ENCODE measurements at regions of chr6 and their contacts with region 1.

Region 1: DNA sequence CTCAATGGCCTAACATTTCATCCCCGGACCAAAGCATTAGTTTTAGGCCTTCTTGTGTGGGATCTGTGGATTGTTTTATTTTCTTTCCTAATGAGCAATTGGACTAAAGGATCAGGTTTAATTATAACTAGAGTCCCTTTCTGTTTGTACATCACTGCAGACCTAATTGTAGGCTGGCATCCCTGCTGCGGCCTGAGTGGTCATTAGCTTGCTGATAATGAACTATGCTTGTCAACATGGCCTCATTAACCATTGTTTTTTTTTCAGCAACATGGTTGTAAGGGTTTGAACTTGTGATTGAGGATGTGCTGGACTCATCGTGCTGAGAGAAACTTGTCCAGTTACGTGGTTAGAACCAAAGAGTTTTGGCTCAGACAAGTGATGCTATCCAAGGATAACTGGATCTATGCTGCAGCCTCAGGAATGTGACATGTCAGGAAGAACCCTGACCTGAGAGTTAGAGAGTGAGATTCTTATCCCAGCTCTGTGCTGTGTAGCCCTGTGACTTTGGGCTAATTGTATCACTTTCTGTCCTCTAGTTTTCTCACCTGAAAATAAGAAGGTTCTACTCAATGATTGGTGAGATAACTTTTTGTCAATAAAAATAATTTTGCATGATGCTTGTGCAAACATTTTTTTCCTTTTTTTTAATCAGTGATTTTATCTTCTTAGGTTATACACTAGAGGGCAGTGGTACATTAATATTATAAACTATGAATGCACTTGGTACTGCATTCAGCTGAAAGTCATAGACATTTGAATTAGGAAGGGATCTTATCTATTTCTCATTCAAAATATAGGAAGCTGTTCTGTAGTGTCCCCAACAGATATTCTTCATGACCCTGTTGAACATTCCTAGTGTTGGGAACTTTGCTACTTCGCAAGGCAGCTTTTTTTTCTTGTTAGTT is 140.9 kb downstream of the RNF144B start:
- DNase-seq: no peak
- H3K4me3 ChIP-seq: no peak overlapping the region
- H3K27ac ChIP-seq: no peak overlapping the region
- H3K4me1 ChIP-seq: no peaks in the 10 kb centered on the region
- H3K27me3 ChIP-seq: peaks cover 2% of the 10 kb centered on the region
- CTCF ChIP-seq: peak; percentile 30 to 46

Region 2: GRCh38 chr6:17816921-17817611 is 711.0 kb before region 1 on chr6:
- CTCF ChIA-PET with region 1: no interaction called
- dilution Hi-C with region 1: no loop called
- in situ Hi-C with region 1: no loop called
- intact Hi-C with region 1: no loop called
- DNase-seq: no peak
- H3K4me3 ChIP-seq: no peak overlapping the region
- H3K27ac ChIP-seq: no peak overlapping the region
- H3K4me1 ChIP-seq: no peaks in the 10 kb centered on the region
- H3K27me3 ChIP-seq: no peaks in the 10 kb centered on the region
- CTCF ChIP-seq: no peak

Region 3: GRCh38 chr6:18053078-18053477 is 475.0 kb before region 1 on chr6:
- CTCF ChIA-PET with region 1: no interaction called
- dilution Hi-C with region 1: no loop called
- in situ Hi-C with region 1: no loop called
- intact Hi-C with region 1: no loop called
- DNase-seq: peak; percentile 89
- H3K4me3 ChIP-seq: no peak overlapping the region
- H3K27ac ChIP-seq: peak overlapping the region; percentile 73
- H3K4me1 ChIP-seq: peaks cover 35% of the 10 kb centered on the region
- H3K27me3 ChIP-seq: no peaks in the 10 kb centered on the region
- CTCF ChIP-seq: no peak

Region 4: GRCh38 chr6:18439581-18439980 is 88.5 kb before region 1 on chr6:
- CTCF ChIA-PET with region 1: no interaction called
- dilution Hi-C with region 1: no loop called
- in situ Hi-C with region 1: no loop called
- intact Hi-C with region 1: no loop called
- DNase-seq: no peak
- H3K4me3 ChIP-seq: no peak overlapping the region
- H3K27ac ChIP-seq: no peak overlapping the region
- H3K4me1 ChIP-seq: peaks cover 7% of the 10 kb centered on the region
- H3K27me3 ChIP-seq: no peaks in the 10 kb centered on the region
- CTCF ChIP-seq: no peak

Region 5: DNA sequence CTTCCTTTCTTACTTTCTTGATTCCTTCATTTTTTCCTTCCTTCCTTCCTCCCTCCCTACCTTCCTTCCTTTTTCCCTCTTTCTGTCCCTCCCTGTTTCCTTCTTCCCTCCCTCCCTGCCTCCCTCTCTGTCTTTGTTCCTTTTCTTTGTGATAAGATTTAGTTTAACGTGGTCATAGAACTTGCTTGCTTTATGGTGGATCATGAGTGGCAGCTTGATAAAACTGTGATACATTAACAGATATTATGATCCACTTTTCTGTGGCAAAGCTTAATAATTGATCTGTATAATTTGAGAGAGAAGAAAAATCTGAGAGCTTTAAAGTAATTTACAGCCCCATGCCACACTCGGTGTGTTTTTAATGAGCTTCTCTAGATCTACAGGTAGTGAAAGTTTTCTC is 139.5 kb after region 1 on chr6:
- CTCF ChIA-PET with region 1: no interaction called
- dilution Hi-C with region 1: no loop called
- in situ Hi-C with region 1: no loop called
- intact Hi-C with region 1: no loop called
- DNase-seq: no peak
- H3K4me3 ChIP-seq: no peak overlapping the region
- H3K27ac ChIP-seq: no peak overlapping the region
- H3K4me1 ChIP-seq: no peaks in the 10 kb centered on the region
- H3K27me3 ChIP-seq: no peaks in the 10 kb centered on the region
- CTCF ChIP-seq: no peak

Region 6: GRCh38 chr6:18680842-18681241 is 152.8 kb after region 1 on chr6:
- CTCF ChIA-PET with region 1: no interaction called
- dilution Hi-C with region 1: no loop called
- in situ Hi-C with region 1: no loop called
- intact Hi-C with region 1: loop called (anchors 2 kb)
- DNase-seq: no peak
- H3K4me3 ChIP-seq: no peak overlapping the region
- H3K27ac ChIP-seq: no peak overlapping the region
- H3K4me1 ChIP-seq: no peaks in the 10 kb centered on the region
- H3K27me3 ChIP-seq: no peaks in the 10 kb centered on the region
- CTCF ChIP-seq: peak; percentile 8 to 35

Measured in mammary epithelial cell (primary cell).